ENCODE measurements at regions of chr17 and their contacts with region 1.

Region 1: DNA sequence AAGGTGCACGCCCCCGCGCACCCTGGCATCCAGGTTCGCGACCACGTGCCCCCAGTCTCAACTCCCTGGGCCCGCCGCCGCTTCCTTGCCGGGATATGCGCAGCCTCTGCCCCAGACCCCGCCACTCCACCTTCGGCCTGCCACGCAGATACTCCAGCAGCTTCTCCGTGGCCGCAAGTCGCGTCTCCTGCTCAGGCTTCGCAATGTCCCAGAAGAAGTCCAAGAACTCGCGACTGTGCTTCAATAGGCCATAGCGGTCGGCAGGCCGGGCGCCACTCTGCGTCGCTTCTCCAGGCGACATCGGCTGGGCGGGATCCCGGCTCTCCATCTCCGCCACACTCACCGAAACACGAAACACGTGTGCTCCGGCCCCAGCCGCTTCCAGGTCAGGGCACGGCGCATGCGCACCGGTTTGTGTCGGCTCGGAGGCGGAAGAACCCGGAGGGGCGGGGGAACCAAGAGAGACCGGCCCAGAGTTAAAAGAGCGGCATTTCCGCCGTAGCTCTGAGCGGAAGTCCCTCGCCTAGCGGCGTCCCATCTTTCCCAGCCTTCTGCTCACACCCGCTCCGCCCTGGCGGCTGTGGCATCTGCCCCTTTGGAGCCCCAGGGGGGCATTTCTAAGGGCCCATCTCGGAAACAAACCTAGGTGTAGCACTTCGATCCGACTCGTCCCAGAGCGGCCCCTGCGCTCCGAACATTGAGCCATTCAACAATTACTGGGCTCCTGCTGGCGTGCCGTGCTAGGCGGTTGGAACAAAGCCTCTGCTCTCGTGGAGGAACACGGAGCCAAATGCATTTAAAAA is at the start of gene MYBBP1A:
- DNase-seq: peak; percentile 97 to 98
- H3K4me3 ChIP-seq: peak within 1 kb of the TSS; percentile 80 to 86
- H3K27ac ChIP-seq: peak within 1 kb of the TSS; percentile 74 to 77
- H3K4me1 ChIP-seq: peaks cover 0 to 42% (median 22%) of the 10 kb centered on the region in 4 donors
- H3K27me3 ChIP-seq: no peaks in the 10 kb centered on the region
- CTCF ChIP-seq: peak; percentile 26 to 34

Region 2: GRCh38 chr17:4498461-4499397 is 56.5 kb before region 1 on chr17 and contains the start of gene SPNS2:
- intact Hi-C with region 1: loop called (anchors 5 kb)
- DNase-seq: peak; percentile 45 to 78
- H3K4me3 ChIP-seq: peak within 1 kb of the TSS; percentile 40 to 55
- H3K27ac ChIP-seq: peak within 1 kb of the TSS; percentile 70 to 82
- H3K4me1 ChIP-seq: peaks cover 0 to 41% (median 32%) of the 10 kb centered on the region in 4 donors
- H3K27me3 ChIP-seq: peaks cover 0 to 35% of the 10 kb centered on the region in 2 donors
- CTCF ChIP-seq: no peak

Measured in tibial artery (tissue), 4 donors.